ENCODE measurements at regions of chr17 and their contacts with region 1.

Region 1: DNA sequence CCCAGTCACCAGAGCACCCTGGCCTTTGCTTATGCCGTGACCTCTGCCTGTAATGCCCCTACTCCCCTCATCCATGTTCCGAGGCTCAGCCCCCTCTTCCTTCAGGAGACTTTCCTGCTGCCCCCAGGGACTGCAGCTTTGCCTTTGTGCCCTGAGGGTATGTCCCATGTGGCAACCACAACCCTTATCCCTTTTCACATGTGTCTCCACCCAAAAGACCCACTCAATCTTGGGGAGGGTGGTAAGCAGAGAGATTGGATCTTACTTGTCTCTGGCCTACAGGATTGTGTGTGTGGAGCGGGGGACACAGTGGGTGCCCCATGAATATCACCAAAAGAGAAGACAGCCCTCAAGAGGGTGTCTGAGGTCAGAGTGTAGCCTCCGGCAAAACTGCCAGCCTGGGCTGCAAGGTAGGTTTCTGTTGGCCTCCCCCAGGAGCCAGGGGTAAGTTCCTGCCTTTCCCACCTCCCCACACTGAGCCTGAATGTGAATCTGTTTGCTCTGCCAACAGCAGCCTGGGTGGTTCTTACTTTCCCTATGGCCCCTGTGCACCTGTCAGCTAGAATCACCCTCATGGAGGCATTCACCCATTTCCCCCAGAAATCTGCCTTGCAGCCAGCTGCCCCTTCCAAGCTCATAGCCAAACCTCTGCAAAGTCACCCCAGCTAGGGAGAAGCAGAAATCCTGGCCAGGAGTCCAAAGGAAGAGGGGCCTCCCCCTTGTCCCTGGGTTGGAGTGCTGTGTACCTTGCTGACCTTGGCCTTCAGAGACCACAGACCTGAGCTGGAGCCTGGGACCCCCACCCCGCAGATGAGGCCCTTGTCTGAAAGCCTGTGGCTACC is 11.5 kb upstream of the C17orf113 start:
- DNase-seq: no peak
- ATAC-seq: no peak

Region 2: DNA sequence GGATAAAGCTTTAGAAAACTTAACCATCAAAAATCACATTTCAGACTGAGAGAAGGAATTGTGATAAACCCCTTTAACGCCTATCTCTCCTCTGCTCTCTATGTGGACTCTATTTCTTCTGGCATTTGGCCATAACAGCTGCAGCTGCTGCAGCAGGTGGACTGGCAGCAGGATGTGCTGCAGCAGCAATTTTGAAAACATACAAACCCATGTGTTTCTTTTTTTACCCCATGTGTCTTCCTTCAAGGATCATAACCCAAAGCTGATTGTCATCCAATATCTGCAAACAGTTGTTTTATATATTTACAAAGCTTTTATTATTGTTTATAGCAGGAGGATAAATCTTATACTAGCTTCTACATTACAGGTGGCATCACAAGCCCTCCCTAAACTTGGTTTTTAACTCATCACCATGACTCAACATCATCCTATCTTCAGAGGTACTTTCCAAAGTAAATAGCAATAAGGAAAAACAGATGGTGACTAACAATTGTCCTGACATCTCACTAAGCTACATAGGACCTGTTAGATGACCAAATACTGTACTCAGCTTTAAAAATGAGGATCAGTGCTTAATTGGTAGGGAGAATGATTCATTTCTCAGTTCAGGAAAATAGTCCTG is 849.9 kb before region 1 on chr17:
- intact Hi-C with region 1: no loop called
- DNase-seq: no peak
- ATAC-seq: no peak

Region 3: DNA sequence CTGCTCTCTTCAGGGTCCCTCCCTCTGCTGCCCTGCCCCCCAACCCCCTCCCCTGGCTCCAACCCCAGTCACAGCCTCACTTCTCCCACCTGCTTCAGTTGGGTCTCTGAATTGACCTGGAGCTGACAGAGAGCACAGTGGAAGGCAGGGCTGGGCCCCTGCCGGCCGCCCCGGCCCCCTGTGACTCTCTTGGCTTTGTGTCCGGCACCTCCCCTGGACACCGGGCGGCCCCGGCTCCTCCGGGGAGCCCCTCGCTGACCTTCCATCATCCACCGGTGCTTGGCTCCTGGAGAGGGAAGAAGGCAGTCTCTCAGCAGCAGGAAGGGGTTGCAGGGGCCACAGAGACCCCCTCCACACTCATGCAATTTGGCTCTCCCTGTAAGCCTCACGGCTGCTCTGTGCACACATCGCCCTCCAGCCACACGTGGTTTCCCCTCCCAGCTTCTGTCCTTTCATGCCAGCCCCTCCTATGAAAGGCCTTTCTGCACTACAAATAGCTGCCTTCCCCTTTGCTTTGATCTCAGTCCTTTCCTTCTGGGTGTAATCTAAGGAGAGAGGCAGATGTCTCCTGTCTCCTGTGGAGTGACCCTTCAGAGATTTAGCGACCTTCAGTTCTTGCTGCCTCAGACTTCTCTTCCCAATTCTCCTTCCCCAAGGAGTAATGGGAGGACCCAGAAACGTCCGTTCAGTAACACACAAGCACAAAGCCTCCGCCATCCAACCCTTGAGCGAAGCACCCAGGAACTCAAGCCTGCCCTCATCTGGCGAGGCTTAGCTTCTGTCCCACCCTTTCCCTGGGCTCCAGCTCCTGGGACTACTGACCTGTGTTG is 33.7 kb before region 1 on chr17:
- intact Hi-C with region 1: loop called in 1 of 2 experiments (anchors 5 kb)
- DNase-seq: no peak
- ATAC-seq: no peak